ENCODE measurements at regions of chr13 and their contacts with region 1.

Region 1: GRCh38 chr13:109156181-109156935 is 526.9 kb downstream of the MYO16 start:
- DNase-seq: peak; percentile 48 to 98
- H3K4me3 ChIP-seq: peak overlapping the region; percentile 48
- H3K27ac ChIP-seq: peak overlapping the region; percentile 96
- H3K4me1 ChIP-seq: peaks cover 69% of the 10 kb centered on the region
- H3K27me3 ChIP-seq: no peaks in the 10 kb centered on the region
- CTCF ChIP-seq: no peak

Region 2: DNA sequence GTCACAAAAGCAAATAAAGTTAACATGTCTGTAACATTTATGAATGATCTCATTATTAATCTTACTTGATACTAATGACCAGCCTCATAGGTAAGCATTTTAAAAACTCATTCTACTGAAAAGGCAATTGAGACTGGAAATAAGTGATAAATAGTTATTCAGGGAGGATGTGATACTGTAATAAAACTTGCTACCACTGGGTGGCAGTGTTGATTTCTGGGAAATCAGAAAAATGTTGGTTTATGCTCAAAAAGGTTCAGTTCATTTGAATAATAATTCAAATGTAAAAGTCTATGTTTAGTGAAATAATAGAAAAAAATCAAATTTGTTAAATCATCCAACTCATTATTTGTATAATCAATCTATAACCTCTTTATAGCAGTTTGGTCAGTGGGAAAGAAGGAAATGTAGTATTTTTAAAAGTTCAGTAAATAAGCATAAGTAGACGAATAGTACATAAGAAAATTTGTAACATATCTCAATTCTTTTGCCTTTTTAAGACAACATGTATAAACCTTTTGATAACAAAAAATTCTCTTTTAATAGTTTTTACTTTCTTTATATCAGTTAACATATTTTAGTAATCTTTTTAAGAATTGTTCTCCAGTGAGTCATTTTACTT is 928.6 kb before region 1 on chr13:
- CTCF ChIA-PET with region 1: interaction called, 11 read pairs
- POLR2A ChIA-PET with region 1: no interaction called
- intact Hi-C with region 1: no loop called
- DNase-seq: no peak
- H3K4me3 ChIP-seq: no peak overlapping the region
- H3K27ac ChIP-seq: no peak overlapping the region
- H3K4me1 ChIP-seq: peaks cover 5% of the 10 kb centered on the region; the same call in 1 of the 2 replicates
- H3K27me3 ChIP-seq: no peaks in the 10 kb centered on the region
- CTCF ChIP-seq: peak; percentile 94

Region 3: DNA sequence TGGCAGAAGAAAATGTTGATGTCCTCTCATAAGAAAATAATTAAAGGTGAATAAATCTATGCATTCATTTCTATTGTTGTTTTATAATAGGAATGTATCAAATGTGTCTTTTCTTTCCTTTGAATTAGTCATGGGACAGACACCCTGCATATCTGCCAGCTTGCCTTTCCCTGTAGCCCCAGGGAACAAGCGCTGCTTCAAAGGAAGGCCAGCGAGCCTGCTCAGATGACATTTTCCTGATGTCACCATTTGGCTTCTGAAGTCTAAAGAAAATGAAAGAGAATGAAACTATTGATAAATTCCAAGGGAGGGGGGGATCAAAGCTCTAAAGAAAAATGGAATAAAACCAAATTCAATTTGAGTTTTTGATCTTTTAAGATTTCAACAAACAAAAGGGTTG is 55.3 kb after region 1 on chr13:
- CTCF ChIA-PET with region 1: no interaction called
- POLR2A ChIA-PET with region 1: no interaction called
- intact Hi-C with region 1: loop called (anchors 2 kb)
- DNase-seq: peak; percentile 84 to 95
- H3K4me3 ChIP-seq: no peak overlapping the region
- H3K27ac ChIP-seq: peak overlapping the region; percentile 62
- H3K4me1 ChIP-seq: peaks cover 18% of the 10 kb centered on the region
- H3K27me3 ChIP-seq: no peaks in the 10 kb centered on the region
- CTCF ChIP-seq: no peak

Region 4: DNA sequence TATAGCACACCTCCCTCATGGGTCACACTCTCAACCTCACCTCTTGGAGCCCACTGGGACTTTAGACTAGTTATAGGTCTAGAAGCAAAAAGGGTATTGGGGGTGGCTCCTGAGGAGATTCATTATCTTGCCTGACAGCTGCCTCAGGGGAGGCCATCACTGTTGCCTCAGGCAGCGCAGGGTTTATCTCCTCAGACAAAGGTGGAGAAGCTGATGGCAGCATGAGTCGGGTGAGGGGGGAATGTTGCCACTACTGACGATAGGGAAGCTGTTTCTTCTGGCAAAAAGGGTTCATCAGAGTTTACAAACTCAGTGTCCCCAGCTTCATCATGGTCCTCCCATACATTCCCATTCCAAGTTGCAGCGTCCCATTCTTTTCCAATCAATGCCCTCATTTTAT is 67.7 kb after region 1 on chr13:
- CTCF ChIA-PET with region 1: no interaction called
- POLR2A ChIA-PET with region 1: no interaction called
- intact Hi-C with region 1: no loop called
- DNase-seq: no peak
- H3K4me3 ChIP-seq: no peak overlapping the region
- H3K27ac ChIP-seq: no peak overlapping the region
- H3K4me1 ChIP-seq: no peaks in the 10 kb centered on the region
- H3K27me3 ChIP-seq: no peaks in the 10 kb centered on the region
- CTCF ChIP-seq: no peak

Region 5: GRCh38 chr13:109361562-109362289 is 205.4 kb after region 1 on chr13:
- CTCF ChIA-PET with region 1: no interaction called
- POLR2A ChIA-PET with region 1: no interaction called
- intact Hi-C with region 1: no loop called
- DNase-seq: no peak
- H3K4me3 ChIP-seq: no peak overlapping the region
- H3K27ac ChIP-seq: no peak overlapping the region
- H3K4me1 ChIP-seq: no peaks in the 10 kb centered on the region
- H3K27me3 ChIP-seq: no peaks in the 10 kb centered on the region
- CTCF ChIP-seq: no peak

Region 6: DNA sequence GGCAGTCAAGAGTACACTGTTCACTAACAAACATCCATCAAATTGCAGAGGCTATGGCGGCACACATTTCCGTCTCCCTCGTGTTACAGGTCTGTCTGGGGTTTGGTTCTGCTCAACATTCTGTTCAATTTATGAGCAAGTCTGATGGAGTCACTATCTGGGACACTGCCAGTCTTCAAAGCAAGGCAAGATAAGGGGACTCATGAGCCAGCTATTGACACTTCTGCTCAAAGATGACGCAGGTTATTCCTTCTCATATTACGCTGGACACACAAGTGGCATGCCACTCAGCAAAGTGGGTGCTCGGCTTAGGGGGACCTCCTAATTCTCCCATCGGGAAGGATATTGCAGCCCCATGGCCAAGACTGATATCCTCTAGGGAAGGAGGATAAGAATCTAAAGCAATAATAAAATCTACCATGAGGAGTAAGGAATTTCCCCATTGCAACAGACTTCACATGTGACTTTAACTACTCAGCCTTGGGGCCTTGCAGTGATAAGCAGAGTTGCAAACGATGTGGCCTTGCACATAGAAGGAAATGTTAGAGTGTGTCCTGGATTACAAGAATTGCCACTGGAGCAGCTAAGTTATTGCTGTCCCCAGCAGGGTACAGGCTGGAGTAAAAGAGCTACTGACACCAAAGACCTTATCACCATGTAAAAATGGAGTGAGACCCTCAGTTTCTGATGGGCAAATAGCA is 323.8 kb after region 1 on chr13:
- CTCF ChIA-PET with region 1: interaction called, 10 read pairs
- POLR2A ChIA-PET with region 1: no interaction called
- intact Hi-C with region 1: no loop called
- DNase-seq: peak in 1 of 2 experiments; percentile 59
- H3K4me3 ChIP-seq: no peak overlapping the region
- H3K27ac ChIP-seq: no peak overlapping the region
- H3K4me1 ChIP-seq: 0 out of 2 replicates have a peak, but pooled peaks cover 7% of the 10 kb centered on the region
- H3K27me3 ChIP-seq: no peaks in the 10 kb centered on the region
- CTCF ChIP-seq: no peak

Region 7: GRCh38 chr13:109989155-109989554 is 832.8 kb after region 1 on chr13:
- CTCF ChIA-PET with region 1: interaction called, 10 read pairs
- POLR2A ChIA-PET with region 1: no interaction called
- intact Hi-C with region 1: no loop called
- DNase-seq: no peak
- H3K4me3 ChIP-seq: no peak overlapping the region
- H3K27ac ChIP-seq: no peak overlapping the region
- H3K4me1 ChIP-seq: no peaks in the 10 kb centered on the region
- H3K27me3 ChIP-seq: no peaks in the 10 kb centered on the region
- CTCF ChIP-seq: no peak

Region 8: DNA sequence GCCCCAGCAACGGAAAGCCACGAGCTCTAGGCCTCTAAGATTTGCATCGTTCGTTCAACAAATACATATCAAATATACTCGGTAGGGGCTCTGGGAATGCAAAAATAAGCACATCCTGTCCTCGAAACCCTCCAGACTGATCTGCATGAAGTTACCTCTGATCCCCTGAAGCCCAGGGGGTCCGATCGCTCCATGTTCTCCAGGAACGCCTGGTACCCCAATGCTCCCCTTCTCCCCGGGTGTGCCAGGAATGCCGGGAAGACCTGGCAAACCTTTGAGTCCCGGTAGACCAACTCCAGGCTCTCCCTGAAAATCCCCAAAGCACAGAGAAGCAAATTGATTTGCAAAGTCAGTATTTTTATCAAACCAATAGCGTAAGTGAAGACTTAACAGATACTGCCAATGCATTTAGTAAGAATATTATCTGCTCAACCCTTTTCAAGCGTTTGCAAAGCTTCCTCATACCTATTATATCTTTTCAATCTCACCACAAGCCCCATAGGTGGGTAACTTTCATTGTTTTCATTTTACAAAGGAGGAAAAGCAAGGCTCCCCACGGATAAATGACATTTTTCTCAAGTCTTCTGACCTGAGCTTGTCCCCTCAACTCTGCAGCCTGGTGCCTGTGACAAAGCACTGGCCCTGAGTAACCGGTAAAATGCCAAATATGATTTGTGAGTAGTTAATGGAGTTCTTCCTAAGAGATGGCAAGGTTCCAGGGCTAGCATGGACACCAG is 1022.9 kb after region 1 on chr13:
- CTCF ChIA-PET with region 1: no interaction called
- POLR2A ChIA-PET with region 1: interaction called, 26 read pairs
- intact Hi-C with region 1: no loop called
- DNase-seq: peak; percentile 57 to 92
- H3K4me3 ChIP-seq: no peak overlapping the region
- H3K27ac ChIP-seq: peak overlapping the region; percentile 32
- H3K4me1 ChIP-seq: peaks cover 33% of the 10 kb centered on the region
- H3K27me3 ChIP-seq: no peaks in the 10 kb centered on the region
- CTCF ChIP-seq: no peak

Measured in PC-9 (cell line).